Stomach (tissue), 19 donors: ENCODE measurements at regions of chr9 and their contacts with region 1.

Region 1: DNA sequence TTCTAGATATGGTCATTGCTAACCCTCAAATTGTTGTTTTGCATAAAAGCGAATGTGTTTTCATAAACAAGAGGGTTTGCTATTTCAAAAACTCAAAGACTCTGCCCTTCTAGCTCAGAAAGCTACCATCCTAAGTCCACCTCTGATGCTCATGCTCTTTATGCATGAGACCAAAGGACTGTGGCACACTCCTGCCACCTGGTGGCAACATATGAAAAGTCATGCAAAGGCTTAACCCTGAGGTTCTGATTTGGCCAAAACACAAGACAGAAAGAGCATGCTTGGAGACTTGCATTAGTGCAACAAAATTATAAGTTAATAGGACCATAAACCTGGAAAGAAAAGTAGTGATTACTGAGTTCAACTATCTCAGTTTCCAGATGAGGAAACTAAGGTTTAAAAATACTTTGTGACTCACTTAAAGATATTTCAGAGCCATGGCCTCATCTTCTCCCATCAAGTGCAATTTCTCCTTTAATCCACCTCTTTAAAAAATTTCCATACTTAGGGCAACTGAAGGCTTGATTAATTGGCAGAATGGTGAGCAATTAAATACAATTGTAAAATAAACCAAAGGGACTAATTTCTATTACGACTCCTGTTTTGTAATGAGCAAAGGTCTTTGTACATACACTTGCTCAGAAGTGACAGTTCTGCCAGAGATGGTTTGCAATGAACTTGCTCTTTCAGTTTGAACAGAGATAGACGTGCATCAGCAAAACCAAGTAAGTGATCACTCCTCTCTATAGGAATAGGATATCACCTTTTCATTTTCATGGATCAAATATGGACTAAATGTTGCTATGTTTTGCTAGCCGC is 110.7 kb upstream of the RAD23B start:
- DNase-seq: peak; percentile 77 to 94
- H3K4me3 ChIP-seq: no peak overlapping the region
- H3K27ac ChIP-seq: no peak overlapping the region
- H3K4me1 ChIP-seq: peaks cover 0 to 16% (median 7%) of the 10 kb centered on the region in 4 donors
- H3K27me3 ChIP-seq: no peaks in the 10 kb centered on the region
- CTCF ChIP-seq: peak in 5 of 7 experiments; percentile 80 to 85 (median 83)
- EP300 ChIP-seq: no peak
- POLR2A ChIP-seq: no peak

Region 2: GRCh38 chr9:106648799-106649198 is 523.6 kb before region 1 on chr9:
- intact Hi-C with region 1: loop called (anchors 10 kb)
- DNase-seq: no peak
- H3K4me3 ChIP-seq: no peak overlapping the region
- H3K27ac ChIP-seq: no peak overlapping the region
- H3K4me1 ChIP-seq: no peaks in the 10 kb centered on the region
- H3K27me3 ChIP-seq: no peaks in the 10 kb centered on the region
- CTCF ChIP-seq: peak in 2 of 7 experiments; percentile 9 to 19
- EP300 ChIP-seq: no peak
- POLR2A ChIP-seq: no peak

Region 3: DNA sequence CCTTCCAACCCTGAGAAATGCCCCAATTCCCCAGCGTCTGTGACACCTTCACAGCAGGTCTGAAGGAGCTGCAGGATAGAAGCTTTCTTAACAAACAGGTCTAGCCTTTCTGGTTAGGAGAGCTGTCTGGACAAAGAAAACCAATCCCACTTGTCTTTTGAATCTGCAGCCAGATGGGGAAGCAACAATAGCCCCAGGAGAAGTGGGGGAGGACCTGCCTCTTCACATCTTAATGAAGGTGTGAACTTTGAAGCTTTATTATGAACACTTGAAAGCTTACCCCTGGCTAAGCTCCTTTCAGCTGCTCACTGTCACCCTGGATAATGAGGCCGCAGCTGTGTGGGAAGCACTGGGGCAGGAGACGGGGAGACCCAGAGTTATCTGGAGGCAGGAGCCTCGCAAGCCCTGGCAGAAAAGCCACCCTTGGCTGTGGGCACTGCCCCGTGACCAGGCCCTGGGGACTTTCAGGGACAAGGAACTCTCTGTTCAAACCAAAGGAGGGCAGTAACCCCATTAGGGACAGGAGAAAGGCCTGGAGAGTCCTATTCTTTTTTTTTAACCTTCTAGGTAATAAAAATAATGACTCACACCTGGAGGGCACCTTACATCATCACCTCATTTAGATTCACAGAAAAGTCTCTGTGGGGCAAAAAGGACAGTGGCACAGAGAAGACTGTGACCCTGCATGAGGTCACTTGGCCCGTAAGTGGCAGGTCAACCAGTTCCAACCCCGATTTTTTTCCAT is 41.1 kb before region 1 on chr9:
- intact Hi-C with region 1: loop called (anchors 5 kb)
- DNase-seq: no peak
- H3K4me3 ChIP-seq: no peak overlapping the region
- H3K27ac ChIP-seq: no peak overlapping the region
- H3K4me1 ChIP-seq: no peaks in the 10 kb centered on the region
- H3K27me3 ChIP-seq: peaks cover 0 to 7% (median 0%) of the 10 kb centered on the region in 3 donors
- CTCF ChIP-seq: no peak
- EP300 ChIP-seq: no peak
- POLR2A ChIP-seq: no peak